Posterior vena cava (tissue), 2 donors: ENCODE measurements at regions of chr6 and their contacts with region 1.

Region 1: DNA sequence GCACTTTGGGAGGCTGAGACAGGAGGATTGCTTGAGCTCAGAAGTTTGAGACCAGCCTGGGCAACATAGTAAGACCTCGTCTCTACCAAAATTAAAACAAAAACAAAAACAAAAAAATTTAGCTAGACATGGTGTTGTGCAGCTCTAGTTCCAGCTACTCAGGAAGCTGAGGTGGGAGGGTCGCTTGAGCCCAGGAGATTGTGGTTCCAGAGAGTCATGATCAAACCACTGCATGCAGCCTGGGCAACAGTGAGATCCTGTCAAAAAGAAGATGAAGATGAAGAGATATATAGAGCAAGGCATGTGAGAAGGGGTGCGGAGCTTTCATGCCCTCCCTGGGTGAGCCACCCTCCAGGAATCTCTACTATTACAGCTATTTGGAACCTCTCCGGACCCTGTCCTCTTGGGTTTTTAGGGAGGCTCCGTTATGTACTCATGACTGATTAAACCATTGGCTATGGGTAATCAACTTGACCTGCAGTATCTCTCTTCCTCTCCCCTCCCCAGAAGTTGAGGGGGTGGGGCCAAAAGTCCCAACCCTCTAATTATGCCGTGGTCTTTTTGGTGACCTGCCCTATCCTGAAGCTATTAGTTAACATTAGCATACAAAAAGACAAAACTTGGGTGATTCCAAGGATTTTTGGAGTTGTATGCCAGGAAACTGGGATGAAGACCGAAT is 9.0 kb downstream of the POLH start:
- DNase-seq: no peak

Region 2: GRCh38 chr6:43604174-43604573 is 19.1 kb after region 1 on chr6:
- intact Hi-C with region 1: loop called in 1 of 2 experiments (anchors 2 kb)
- DNase-seq: no peak

Region 3: DNA sequence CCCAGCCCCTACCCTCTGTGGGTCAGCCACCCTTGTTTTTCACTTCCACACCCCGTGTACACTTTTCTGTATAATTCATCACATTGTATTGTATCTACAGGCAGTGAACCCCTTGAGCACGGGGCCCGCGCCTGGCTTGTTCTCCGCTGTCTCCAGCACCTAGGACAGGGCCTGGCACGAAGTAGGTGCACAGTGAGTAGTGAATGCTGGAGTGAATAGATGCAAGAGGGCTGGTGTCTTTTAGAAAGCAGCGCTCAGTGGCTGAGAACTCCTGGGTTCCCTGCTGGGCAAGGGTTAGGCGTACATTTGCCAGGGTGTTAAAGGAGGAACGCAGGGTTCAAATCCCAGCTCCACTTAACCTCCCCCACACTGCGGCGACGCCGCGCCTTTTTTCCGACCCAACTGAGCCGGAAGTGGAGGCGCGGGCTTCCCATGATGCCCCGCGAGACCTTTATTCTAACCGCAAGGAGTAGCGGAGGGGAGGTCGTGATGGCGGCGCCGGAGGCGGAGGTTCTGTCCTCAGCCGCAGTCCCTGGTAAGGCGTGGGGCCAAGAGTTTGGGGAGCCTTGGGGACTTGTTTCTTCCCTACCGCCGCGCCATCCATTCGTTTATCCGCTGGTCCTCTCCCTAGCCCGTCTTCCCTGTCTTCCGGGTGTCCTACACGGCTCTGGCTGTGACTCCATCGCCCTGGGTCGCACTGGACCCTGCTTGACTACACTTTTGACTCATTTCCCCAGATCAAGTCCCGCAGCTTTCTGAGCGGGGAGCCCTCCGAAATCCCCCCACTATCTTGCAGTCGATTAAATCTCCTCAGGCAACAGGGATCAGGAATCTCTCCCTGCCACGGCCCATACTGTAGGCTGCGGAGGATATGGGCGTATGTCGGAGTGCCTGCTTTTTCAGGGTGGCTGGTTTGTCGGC is 50.6 kb after region 1 on chr6 and contains the start of gene MAD2L1BP:
- intact Hi-C with region 1: no loop called
- DNase-seq: peak; percentile 95
- total RNA-seq, gene MAD2L1BP: 12.0 to 15.5 TPM